ENCODE measurements at regions of chr6 and their contacts with region 1.

Region 1: GRCh38 chr6:582370-582769 is 74.5 kb downstream of the HUS1B start:
- DNase-seq: peak; percentile 56
- ATAC-seq: no peak
- H3K4me3 ChIP-seq: no peak overlapping the region
- H3K27ac ChIP-seq: no peak overlapping the region
- H3K4me1 ChIP-seq: no peaks in the 10 kb centered on the region
- H3K27me3 ChIP-seq: no peaks in the 10 kb centered on the region
- CTCF ChIP-seq: no peak
- EP300 ChIP-seq: no peak
- POLR2A ChIP-seq: no peak
- RAD21 ChIP-seq: no peak

Region 2: GRCh38 chr6:776528-776931 is 194.2 kb after region 1 on chr6:
- CTCF ChIA-PET with region 1: no interaction called
- POLR2A ChIA-PET with region 1: no interaction called
- in situ Hi-C with region 1: loop called (anchors 10 kb)
- intact Hi-C with region 1: no loop called
- DNase-seq: no peak
- ATAC-seq: no peak
- H3K4me3 ChIP-seq: no peak overlapping the region
- H3K27ac ChIP-seq: no peak overlapping the region
- H3K4me1 ChIP-seq: no peaks in the 10 kb centered on the region
- H3K27me3 ChIP-seq: peaks cover 1 to 66% of the 10 kb centered on the region in 2 experiments; a peak in 4 of 5 replicates
- CTCF ChIP-seq: no peak
- EP300 ChIP-seq: no peak
- POLR2A ChIP-seq: no peak
- RAD21 ChIP-seq: no peak

Measured in HepG2 (cell line).